Heart right ventricle (tissue), 16 donors: ENCODE measurements at regions of chr13 and their contacts with region 1.

Region 1: GRCh38 chr13:112532837-112533745 is 54.9 kb downstream of the TUBGCP3 start:
- DNase-seq: no peak
- ATAC-seq: no peak
- H3K4me3 ChIP-seq: no peak overlapping the region
- H3K27ac ChIP-seq: no peak overlapping the region
- H3K4me1 ChIP-seq: peaks cover 0 to 9% (median 3%) of the 10 kb centered on the region in 9 donors
- H3K27me3 ChIP-seq: no peaks in the 10 kb centered on the region
- CTCF ChIP-seq: no peak

Region 2: DNA sequence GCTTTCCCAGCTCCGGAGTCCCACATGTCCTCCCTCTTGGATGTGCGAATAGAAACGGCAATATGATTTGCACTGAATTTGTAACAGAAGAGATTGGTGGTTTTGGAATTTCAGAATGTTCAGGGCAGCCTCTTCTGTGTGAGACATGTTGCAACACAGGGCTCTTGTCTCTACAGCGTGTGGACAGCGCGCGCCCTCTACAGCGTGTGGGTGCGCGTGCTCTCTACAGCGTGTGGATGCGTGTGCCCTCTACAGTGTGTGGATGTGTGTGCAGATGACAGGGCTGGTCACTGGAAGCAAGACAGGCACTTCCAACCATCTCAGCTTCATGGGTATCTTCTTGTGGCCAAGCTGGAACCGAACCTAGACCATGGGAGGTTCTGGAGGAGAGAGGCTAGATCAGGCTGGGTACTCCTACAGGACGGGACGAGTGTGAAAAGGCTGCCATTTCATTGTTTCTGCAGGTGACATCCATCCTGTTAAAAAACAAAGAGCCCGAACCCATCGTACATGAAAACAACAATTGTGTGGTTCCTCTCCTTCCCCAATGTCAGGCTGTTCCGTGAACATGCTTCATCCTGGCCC is 1134.3 kb before region 1 on chr13:
- intact Hi-C with region 1: loop called in 1 of 10 experiments (anchors 5 kb)
- DNase-seq: no peak
- ATAC-seq: no peak
- H3K4me3 ChIP-seq: no peak overlapping the region
- H3K27ac ChIP-seq: no peak overlapping the region
- H3K4me1 ChIP-seq: no peaks in the 10 kb centered on the region
- H3K27me3 ChIP-seq: peaks cover 0 to 22% (median 14%) of the 10 kb centered on the region in 7 donors
- CTCF ChIP-seq: no peak